A673 (cell line): ENCODE measurements at regions of chr3 and their contacts with region 1.

Region 1: GRCh38 chr3:132416807-132417694 is at the start of gene DNAJC13:
- DNase-seq: peak; percentile 96
- H3K4me3 ChIP-seq: peak within 1 kb of the TSS; percentile 89
- H3K27ac ChIP-seq: peak within 1 kb of the TSS; percentile 87
- H3K4me1 ChIP-seq: peaks cover 10% of the 10 kb centered on the region
- H3K27me3 ChIP-seq: no peaks in the 10 kb centered on the region
- CTCF ChIP-seq: no peak
- total RNA-seq, gene DNAJC13: 45.4 and 46.0 TPM in 2 replicates

Region 2: DNA sequence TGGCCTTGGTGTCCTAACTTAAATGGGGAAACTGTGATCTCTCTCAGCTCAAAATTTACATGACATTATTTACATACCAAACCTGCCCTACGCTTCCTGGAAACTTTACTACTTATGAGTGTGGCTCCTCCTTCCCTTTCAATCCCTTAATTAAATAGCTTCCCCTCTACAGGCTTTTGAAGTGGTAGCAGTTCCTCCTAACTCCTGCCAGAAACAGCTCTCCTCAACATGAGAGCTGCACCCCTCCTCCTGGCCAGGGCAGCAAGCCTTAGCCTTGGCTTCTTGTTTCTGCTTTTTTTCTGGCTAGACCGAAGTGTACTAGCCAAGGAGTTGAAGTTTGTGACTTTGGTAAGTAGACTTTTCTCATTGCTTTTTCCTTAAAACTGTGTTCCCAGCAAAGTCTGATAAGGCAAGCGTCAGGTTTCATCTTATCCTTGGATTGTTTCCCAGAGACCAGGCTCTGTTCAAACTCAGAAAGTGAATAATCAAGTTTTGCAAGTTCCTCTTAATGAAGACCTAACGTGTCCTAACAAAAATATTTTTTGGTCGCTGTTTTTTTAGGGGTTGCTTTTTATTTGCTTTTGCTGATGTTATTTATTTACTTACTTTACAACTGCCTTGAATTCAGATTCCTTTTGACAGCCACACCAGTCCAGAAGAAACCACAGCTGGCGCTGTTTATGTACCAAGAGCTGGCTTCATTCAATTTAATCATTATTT is 99.7 kb before region 1 on chr3 and contains the start of gene ACP3:
- CTCF ChIA-PET with region 1: no interaction called
- POLR2A ChIA-PET with region 1: no interaction called
- intact Hi-C with region 1: no loop called
- DNase-seq: peak; percentile 91
- H3K4me3 ChIP-seq: peak within 1 kb of the TSS; percentile 45
- H3K27ac ChIP-seq: peak within 1 kb of the TSS; percentile 66
- H3K4me1 ChIP-seq: peaks cover 37% of the 10 kb centered on the region
- H3K27me3 ChIP-seq: no peaks in the 10 kb centered on the region
- CTCF ChIP-seq: peak; percentile 25; the same call in 1 of the 2 replicates
- total RNA-seq, gene ACP3: 13.9 and 14.6 TPM in 2 replicates

Region 3: DNA sequence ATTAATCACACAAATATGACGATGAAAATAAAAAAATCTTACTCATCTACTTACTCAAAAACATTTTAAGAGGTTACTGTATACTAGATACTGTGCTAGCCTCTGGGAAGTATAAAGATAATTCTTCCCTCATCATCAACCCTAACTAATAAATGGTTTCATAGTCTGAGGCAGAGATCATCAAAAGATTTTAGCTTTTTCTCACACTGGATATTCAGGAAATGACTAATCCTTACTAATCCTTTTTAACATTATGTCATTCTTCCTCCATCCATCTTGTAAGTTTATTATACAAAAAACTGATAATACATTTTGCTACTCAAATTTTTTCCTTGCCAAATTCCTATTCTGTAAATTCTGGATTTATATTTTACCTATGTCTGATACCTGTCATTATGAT is 212.9 kb after region 1 on chr3:
- CTCF ChIA-PET with region 1: no interaction called
- POLR2A ChIA-PET with region 1: no interaction called
- intact Hi-C with region 1: loop called (anchors 5 kb)
- DNase-seq: peak; percentile 89
- H3K4me3 ChIP-seq: peak overlapping the region; percentile 36
- H3K27ac ChIP-seq: peak overlapping the region; percentile 85
- H3K4me1 ChIP-seq: peaks cover 35% of the 10 kb centered on the region
- H3K27me3 ChIP-seq: no peaks in the 10 kb centered on the region
- CTCF ChIP-seq: no peak